ENCODE measurements at regions of chr13 and their contacts with region 1.

Region 1: DNA sequence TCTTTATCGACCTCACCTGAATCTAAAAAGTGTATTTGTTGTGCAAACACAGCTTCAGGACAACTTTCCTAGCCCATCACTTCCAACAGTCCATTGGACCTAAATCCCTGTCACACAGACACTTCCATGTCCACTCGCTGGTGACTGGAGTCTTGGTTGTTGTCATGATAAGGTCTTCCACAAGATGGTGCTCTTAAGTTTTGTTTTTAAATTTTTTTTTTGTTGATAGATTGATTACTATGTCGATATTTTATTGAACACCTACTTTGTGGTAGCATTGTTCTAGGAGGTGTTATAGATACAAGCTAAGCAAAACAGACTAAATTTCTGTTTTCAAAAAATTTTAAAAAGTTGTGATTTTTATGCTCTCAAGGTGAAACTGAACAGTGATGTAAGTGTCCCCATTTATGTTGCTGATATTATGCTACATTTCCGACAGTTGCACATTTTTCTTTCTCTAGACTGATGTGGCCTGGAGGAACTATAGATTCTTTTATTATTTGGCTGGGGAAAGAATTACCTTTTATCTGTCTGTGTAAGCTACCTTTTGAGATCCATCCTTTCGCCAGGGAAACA is 8.1 kb upstream of the ERICH6B start:
- DNase-seq: peak in 2 of 9 experiments; percentile 21 to 34
- ATAC-seq: no peak
- H3K4me3 ChIP-seq: no peak overlapping the region
- H3K4me3 Mint-ChIP-seq: no peak overlapping the region
- H3K27ac ChIP-seq: no peak overlapping the region
- H3K27ac Mint-ChIP-seq: no peak overlapping the region
- H3K4me1 ChIP-seq: peaks cover 5% of the 10 kb centered on the region
- H3K4me1 Mint-ChIP-seq: peaks cover 2% of the 10 kb centered on the region
- H3K27me3 ChIP-seq: no peaks in the 10 kb centered on the region
- H3K27me3 Mint-ChIP-seq: peaks cover 27% of the 10 kb centered on the region
- CTCF ChIP-seq: peak; percentile 53

Region 2: DNA sequence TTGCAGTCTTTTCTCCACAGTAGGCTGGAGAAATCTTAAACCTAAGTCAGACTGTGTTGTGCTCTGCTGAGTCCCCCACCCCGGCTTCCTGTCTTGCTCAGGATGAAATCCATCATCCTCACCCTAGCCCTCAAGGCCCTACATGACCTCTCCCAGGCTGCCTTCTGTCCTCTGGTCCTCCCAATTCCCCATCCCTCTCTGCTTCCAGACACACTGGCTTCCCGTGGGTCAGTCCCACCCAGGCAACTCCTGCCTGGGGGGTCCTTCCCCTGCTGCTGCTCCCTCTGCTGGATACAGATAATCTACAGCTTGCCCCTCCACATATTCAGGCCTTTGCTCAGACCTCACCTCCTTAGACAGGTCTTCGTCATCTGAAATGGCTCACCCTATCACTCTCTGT is 60.1 kb after region 1 on chr13:
- CTCF ChIA-PET with region 1: interaction called, 12 read pairs
- POLR2A ChIA-PET with region 1: no interaction called
- intact Hi-C with region 1: loop called in 1 of 2 experiments (anchors 10 kb)
- DNase-seq: peak in 2 of 9 experiments; percentile 4 to 7
- ATAC-seq: no peak
- H3K4me3 ChIP-seq: no peak overlapping the region
- H3K4me3 Mint-ChIP-seq: no peak overlapping the region
- H3K27ac ChIP-seq: no peak overlapping the region
- H3K27ac Mint-ChIP-seq: no peak overlapping the region
- H3K4me1 ChIP-seq: no peaks in the 10 kb centered on the region
- H3K4me1 Mint-ChIP-seq: peaks cover 4% of the 10 kb centered on the region
- H3K27me3 ChIP-seq: no peaks in the 10 kb centered on the region
- H3K27me3 Mint-ChIP-seq: peaks cover 2% of the 10 kb centered on the region
- CTCF ChIP-seq: no peak

Region 3: GRCh38 chr13:45718063-45718462 is 94.5 kb after region 1 on chr13:
- CTCF ChIA-PET with region 1: no interaction called
- POLR2A ChIA-PET with region 1: no interaction called
- intact Hi-C with region 1: loop called (anchors 5 to 10 kb)
- DNase-seq: peak in 1 of 9 experiments; percentile 13
- ATAC-seq: no peak
- H3K4me3 ChIP-seq: no peak overlapping the region
- H3K4me3 Mint-ChIP-seq: no peak overlapping the region
- H3K27ac ChIP-seq: no peak overlapping the region
- H3K27ac Mint-ChIP-seq: no peak overlapping the region
- H3K4me1 ChIP-seq: no peaks in the 10 kb centered on the region
- H3K4me1 Mint-ChIP-seq: no peaks in the 10 kb centered on the region
- H3K27me3 ChIP-seq: no peaks in the 10 kb centered on the region
- H3K27me3 Mint-ChIP-seq: no peaks in the 10 kb centered on the region
- CTCF ChIP-seq: peak; percentile 23

Region 4: DNA sequence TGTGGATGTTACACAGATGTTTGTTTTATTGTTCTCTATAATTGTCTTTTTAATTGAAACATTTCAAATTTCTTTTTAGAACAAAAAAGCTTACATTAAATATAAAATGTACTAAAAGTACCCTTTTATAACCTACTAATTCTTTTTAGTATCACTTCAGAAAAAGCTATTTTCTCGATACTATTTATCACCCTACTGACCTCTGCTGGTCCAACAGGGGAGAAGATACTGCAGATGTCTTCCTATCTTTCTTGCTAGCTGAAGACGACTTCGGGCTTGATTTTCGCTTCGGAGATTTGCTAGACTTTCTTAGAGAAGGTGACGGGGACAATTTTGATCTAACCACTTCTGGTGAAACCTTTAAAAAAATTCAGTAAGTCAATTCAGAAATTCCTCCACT is 386.5 kb after region 1 on chr13:
- CTCF ChIA-PET with region 1: no interaction called
- POLR2A ChIA-PET with region 1: no interaction called
- intact Hi-C with region 1: loop called in 1 of 2 experiments (anchors 10 kb)
- DNase-seq: no peak
- ATAC-seq: no peak
- H3K4me3 ChIP-seq: no peak overlapping the region
- H3K4me3 Mint-ChIP-seq: no peak overlapping the region
- H3K27ac ChIP-seq: no peak overlapping the region
- H3K27ac Mint-ChIP-seq: no peak overlapping the region
- H3K4me1 ChIP-seq: no peaks in the 10 kb centered on the region
- H3K4me1 Mint-ChIP-seq: no peaks in the 10 kb centered on the region
- H3K27me3 ChIP-seq: no peaks in the 10 kb centered on the region
- H3K27me3 Mint-ChIP-seq: no peaks in the 10 kb centered on the region
- CTCF ChIP-seq: no peak

Measured in CD8-positive, alpha-beta T cell (primary cell).